H1 (cell line): ENCODE measurements at regions of chr9 and their contacts with region 1.

Region 1: GRCh38 chr9:131546336-131547084 is 1.2 kb downstream of the PRRT1B start:
- DNase-seq: peak in 1 of 2 experiments; percentile 70
- H3K4me3 ChIP-seq: peak overlapping the region; percentile 36 to 68 (median 44)
- H3K27ac ChIP-seq: no peak overlapping the region
- H3K4me1 ChIP-seq: peaks cover 0 to 4% (median 3%) of the 10 kb centered on the region in 4 experiments; a peak in 3 of 7 replicates
- H3K27me3 ChIP-seq: peaks cover 17 to 42% (median 33%) of the 10 kb centered on the region in 4 experiments
- CTCF ChIP-seq: peak in 1 of 3 experiments; percentile 22; a peak in 2 of 4 replicates
- EP300 ChIP-seq: no peak
- POLR2A ChIP-seq: no peak
- RAD21 ChIP-seq: peak in 1 of 2 experiments; percentile 11; a peak in 1 of 4 replicates

Region 2: DNA sequence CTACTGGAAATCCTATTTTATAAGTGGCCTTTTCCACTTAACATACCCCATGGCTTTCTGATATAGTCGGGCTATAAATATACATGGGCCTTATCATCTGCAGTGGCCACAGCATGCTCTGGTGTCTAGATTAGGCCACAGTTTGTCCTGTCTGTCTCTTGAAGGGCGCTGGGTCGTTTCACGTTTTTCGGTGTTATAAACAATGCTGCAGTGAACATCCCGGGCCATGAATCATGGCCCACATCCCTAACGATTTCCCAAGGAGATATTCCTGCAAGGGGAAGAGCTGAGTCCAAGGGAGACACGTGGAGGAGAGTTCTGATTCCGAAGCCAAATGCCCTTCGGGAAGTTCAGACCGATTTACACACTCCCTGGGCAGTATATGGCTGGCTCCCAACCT is 248.6 kb before region 1 on chr9:
- CTCF ChIA-PET with region 1: no interaction called
- POLR2A ChIA-PET with region 1: no interaction called
- DNase-seq: no peak
- H3K4me3 ChIP-seq: no peak overlapping the region
- H3K27ac ChIP-seq: no peak overlapping the region
- H3K4me1 ChIP-seq: peaks cover 0 to 5% (median 3%) of the 10 kb centered on the region in 4 experiments; a peak in 2 of 7 replicates
- H3K27me3 ChIP-seq: no peaks in the 10 kb centered on the region
- CTCF ChIP-seq: no peak
- EP300 ChIP-seq: no peak
- POLR2A ChIP-seq: no peak
- RAD21 ChIP-seq: no peak

Region 3: GRCh38 chr9:131525643-131526565 is 20.6 kb before region 1 on chr9:
- CTCF ChIA-PET with region 1: no interaction called
- POLR2A ChIA-PET with region 1: no interaction called
- DNase-seq: no peak
- H3K4me3 ChIP-seq: no peak overlapping the region
- H3K27ac ChIP-seq: no peak overlapping the region
- H3K4me1 ChIP-seq: peaks cover 0 to 6% (median 4%) of the 10 kb centered on the region in 4 experiments; a peak in 6 of 7 replicates
- H3K27me3 ChIP-seq: no peaks in the 10 kb centered on the region
- CTCF ChIP-seq: no peak
- EP300 ChIP-seq: no peak
- POLR2A ChIP-seq: no peak
- RAD21 ChIP-seq: no peak

Region 4: DNA sequence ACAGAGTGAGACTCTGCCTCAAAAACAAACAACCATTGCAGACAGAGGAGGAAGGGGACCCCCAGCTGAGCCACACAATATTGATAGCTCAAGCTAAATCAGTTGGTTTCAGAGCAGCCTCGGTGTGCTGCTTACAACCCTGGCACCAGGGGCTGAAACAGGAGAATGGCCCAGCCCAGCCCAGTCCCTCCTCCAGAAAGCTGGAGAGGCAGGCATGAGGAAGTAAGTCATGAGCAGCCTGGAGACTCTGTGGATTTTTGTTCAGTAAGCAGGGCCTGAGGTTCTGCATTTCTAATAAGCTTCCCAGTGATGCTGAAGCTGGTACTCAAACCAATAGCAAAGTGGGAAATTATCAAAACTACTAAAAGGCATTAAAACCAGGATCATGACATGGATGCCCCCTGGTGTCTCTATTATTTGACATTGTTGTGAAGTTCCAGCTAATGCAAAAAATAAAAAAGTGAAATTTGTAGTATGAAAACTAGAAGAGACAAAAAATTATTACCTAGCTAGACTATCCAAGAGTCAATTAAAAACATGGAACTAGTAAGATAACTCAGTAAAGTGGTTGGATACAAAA is 13.0 kb after region 1 on chr9:
- CTCF ChIA-PET with region 1: interaction called, 10 read pairs
- POLR2A ChIA-PET with region 1: interaction called, 5 read pairs
- DNase-seq: no peak
- H3K4me3 ChIP-seq: no peak overlapping the region
- H3K27ac ChIP-seq: no peak overlapping the region
- H3K4me1 ChIP-seq: no peaks in the 10 kb centered on the region; a peak in 1 of 7 replicates
- H3K27me3 ChIP-seq: peaks cover 9 to 19% (median 16%) of the 10 kb centered on the region in 4 experiments
- CTCF ChIP-seq: no peak
- EP300 ChIP-seq: no peak
- POLR2A ChIP-seq: no peak
- RAD21 ChIP-seq: no peak